ENCODE measurements at regions of chr1 and their contacts with region 1.

Region 1: DNA sequence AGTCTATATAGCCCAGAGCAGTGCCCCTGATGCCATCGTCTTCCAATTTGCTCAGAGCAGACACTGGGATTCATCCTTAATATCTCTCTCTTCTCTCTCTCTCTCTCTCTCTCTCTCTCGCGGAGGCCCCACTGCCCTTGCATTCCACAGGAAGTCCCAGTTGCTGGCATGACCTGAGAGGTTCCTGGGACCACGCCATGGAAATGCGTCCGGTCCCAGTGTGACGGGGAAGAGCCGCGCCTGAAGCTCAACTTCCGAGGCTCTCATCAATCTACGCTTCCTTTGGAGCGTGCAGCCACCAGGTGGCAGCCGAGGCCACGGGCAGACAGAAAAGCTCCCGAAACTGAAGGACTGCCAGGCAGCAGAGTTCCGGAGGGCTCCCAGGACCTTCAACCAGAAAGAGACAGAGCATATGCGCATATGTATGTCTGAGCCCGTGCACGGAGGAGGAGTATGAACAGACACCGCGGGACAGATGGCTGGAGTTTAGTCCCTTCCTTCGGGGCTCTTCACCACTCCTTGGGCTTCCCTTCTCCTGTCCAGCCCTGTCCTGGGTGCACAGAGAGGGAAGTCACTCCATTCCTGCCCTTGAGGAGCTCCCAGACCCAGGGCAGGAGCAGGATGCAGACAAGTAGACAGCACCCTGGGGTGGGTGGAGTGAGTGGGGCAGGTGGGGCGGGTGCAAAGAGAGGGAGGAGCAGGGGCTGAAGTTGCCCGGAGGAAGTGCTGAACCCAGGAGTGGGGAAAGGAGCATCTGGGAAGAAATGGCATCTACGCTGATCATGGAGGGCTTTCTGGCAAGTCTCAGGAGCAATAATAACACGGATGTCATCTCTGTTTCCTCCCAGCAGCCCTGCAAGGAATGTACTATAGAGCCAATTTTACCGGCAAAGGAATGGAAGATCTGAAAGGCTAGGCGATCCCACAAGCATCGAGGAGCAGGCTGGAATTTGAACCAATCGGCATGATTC is 10.5 kb downstream of the PDZK1IP1 start:
- DNase-seq: peak; percentile 93
- H3K4me3 Mint-ChIP-seq: peak overlapping the region; percentile 74
- H3K27ac Mint-ChIP-seq: peak overlapping the region; percentile 99
- H3K4me1 Mint-ChIP-seq: peaks cover 58% of the 10 kb centered on the region
- H3K27me3 Mint-ChIP-seq: no peaks in the 10 kb centered on the region
- CTCF ChIP-seq: peak; percentile 87

Region 2: DNA sequence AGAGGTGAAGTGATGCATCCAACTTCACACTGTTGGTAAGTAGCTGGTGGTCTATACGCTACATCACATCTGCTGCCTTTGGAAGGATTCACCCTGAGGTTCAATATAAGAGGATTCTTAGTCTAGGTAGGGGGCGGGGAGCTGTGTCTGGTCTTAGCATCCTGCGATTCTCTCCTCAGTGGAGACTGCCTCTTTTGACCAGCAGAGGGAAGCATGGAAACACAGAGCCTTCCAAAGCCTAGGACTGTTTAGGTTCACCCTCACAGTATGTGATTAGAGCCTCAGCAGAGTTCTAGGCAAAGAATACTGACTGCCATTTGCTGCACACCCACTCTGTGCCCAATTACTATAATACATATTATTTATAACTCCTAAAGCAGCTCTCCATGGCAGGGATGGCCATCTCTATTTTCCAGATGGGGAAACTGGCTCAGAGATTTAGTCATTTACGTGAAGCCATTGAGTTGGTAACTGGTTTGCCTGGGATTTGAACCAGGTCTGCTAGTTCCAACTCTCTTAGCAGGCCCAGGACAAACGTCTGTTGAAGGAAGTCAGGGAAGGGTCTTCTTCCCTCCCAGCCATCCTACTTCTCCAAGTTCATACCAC is 431.5 kb before region 1 on chr1:
- CTCF ChIA-PET with region 1: interaction called, 38 read pairs
- POLR2A ChIA-PET with region 1: interaction called, 5 read pairs
- intact Hi-C with region 1: loop called (anchors 1 kb)
- DNase-seq: peak; percentile 86
- H3K4me3 Mint-ChIP-seq: no peak overlapping the region
- H3K27ac Mint-ChIP-seq: no peak overlapping the region
- H3K4me1 Mint-ChIP-seq: peaks cover 48% of the 10 kb centered on the region
- H3K27me3 Mint-ChIP-seq: peaks cover 11% of the 10 kb centered on the region
- CTCF ChIP-seq: peak; percentile 57

Region 3: DNA sequence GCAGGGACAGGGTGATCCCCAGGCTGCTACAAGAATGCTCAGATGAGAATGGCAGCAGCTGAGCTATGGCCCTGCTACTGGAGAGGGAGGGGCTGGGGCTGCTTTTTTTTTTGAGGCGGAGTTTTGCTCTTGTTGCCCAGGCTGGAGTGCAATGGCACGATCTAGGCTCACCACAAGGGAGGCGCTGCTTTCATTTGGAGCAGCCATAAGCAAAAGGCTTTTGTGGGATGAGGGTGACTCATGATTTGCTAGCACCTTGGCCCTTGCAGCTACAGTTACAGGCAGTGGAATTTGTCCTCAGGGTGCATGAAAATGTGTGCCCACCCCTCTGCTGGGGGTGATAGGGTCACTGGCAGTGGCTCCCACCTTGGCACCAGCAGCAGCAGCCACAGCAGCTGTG is 74.5 kb before region 1 on chr1:
- CTCF ChIA-PET with region 1: interaction called, 3 read pairs
- POLR2A ChIA-PET with region 1: interaction called, 4 read pairs
- intact Hi-C with region 1: loop called (anchors 5 kb)
- DNase-seq: peak; percentile 40
- H3K4me3 Mint-ChIP-seq: no peak overlapping the region
- H3K27ac Mint-ChIP-seq: no peak overlapping the region
- H3K4me1 Mint-ChIP-seq: no peaks in the 10 kb centered on the region
- H3K27me3 Mint-ChIP-seq: no peaks in the 10 kb centered on the region
- CTCF ChIP-seq: no peak

Region 4: DNA sequence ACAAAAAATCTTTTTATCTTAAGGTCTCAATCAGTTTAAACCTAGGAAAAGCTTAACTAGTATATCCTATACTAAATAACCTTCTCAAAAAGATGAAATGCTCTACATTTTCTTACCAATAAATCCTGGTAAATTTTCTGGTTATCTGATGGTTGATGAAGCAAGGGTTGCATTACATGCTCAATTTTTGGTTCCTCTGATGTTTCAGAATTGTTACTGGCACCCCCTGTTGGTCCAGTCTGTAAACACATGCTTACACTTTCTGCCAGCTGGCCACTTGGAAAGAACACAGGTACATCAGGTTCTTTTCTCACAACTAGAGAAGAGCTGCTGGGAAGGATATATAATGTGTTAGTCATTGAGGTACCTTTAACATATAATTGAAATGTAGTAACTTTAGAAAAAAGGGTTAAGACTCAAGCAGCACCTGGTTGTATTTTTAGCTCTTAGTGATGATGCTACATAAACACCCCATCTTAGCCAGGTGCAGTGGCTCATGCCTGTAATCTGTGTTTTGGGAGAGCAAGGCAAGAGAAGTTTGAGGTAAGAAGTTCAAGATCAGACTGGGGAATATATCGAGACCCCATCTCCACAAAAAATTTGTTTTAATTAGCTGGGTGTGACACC is 83.6 kb after region 1 on chr1:
- CTCF ChIA-PET with region 1: interaction called, 43 read pairs
- POLR2A ChIA-PET with region 1: interaction called, 21 read pairs
- intact Hi-C with region 1: loop called (anchors 1 kb)
- DNase-seq: peak; percentile 67
- H3K4me3 Mint-ChIP-seq: no peak overlapping the region
- H3K27ac Mint-ChIP-seq: no peak overlapping the region
- H3K4me1 Mint-ChIP-seq: peaks cover 16% of the 10 kb centered on the region
- H3K27me3 Mint-ChIP-seq: no peaks in the 10 kb centered on the region
- CTCF ChIP-seq: peak; percentile 71

Region 5: DNA sequence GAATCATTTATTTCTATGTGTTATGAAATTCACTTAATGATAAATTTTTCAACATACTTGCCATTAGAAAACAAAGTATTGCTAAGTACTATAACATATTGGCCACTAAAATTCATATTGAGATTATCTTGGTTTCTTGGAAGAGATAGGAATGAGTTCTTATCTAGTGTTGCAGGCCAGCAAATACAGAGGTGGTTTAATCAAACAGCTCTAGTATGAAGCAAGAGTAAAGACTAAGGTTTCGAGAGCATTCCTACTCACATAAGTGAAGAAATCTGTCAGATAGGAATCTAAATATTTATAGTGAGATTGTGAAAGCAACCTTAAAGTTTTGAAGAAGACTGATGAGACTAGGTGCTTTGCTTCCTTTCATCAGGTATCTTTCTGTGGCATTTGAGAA is 198.8 kb after region 1 on chr1:
- CTCF ChIA-PET with region 1: interaction called, 10 read pairs
- POLR2A ChIA-PET with region 1: interaction called, 3 read pairs
- intact Hi-C with region 1: no loop called
- DNase-seq: no peak
- H3K4me3 Mint-ChIP-seq: no peak overlapping the region
- H3K27ac Mint-ChIP-seq: no peak overlapping the region
- H3K4me1 Mint-ChIP-seq: no peaks in the 10 kb centered on the region
- H3K27me3 Mint-ChIP-seq: no peaks in the 10 kb centered on the region
- CTCF ChIP-seq: no peak

Region 6: DNA sequence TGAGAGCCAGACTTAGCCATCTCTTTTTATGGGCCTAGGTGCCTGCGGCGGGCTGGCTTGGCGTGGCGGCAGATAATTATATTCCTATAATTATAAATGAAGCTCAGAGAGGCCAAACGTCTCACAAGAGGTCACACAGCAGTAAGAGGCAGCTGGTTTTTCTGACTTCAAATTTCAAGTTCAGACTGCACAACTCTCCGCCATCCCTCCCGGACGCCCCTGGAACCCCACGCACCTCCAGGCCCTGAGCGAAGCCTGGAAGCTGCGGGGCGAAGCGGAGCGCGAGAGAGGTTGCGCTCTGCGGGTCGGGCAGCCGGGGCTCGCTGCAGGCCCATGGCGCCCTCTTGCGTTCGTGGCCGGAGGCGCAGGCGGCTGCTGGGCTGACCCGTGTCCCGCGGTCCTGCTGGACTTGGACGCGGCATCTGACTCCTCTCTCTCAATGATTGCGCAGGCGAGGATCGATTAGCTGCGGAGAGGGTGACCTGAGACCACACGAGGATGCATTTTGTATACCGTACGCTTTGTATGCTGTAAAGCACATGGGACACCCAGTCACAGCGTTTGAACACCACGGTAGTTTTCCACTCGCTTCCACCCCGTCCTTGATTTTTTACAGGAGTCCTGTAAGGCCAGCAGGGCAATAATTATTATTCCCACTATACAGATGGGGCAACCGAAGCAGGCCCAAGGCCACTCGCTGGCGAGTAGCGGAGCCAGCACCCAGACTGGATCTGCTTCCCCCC is 531.2 kb after region 1 on chr1:
- CTCF ChIA-PET with region 1: interaction called, 16 read pairs
- POLR2A ChIA-PET with region 1: no interaction called
- intact Hi-C with region 1: loop called (anchors 2 kb)
- DNase-seq: peak; percentile 47
- H3K4me3 Mint-ChIP-seq: no peak overlapping the region
- H3K27ac Mint-ChIP-seq: no peak overlapping the region
- H3K4me1 Mint-ChIP-seq: no peaks in the 10 kb centered on the region
- H3K27me3 Mint-ChIP-seq: peaks cover 54% of the 10 kb centered on the region
- CTCF ChIP-seq: peak; percentile 99

Measured in MCF 10A (cell line).